Activated CD8-positive, alpha-beta T cell treated with anti-CD3 and anti-CD28 coated beads, Interleukin-2, amount 10 ng/mL, durations not matched to agents 7 days and 5 days (primary cell): ENCODE measurements at regions of chr2 and their contacts with region 1.

Region 1: DNA sequence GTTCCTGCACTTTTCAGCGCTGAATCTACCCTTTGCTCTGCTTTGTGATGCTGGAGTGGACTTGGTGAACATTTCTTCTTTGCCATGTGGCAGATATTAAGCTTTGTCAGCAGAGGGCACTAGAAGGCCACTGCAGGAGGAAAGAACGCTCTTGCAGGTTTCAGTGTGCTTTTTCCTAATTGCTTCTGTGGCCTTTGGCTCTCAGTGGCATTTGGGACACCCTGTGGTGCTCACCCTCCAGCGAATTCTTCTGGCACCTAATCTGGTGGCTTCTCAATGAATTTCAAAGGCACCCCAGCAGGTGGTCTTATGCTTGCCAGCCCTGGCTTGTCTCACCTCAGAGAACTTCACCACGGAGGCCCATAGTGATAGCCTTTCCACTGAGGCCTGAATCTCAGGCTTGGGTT is 146.7 kb downstream of the MYO3B start:
- DNase-seq: peak; percentile 69
- ATAC-seq: peak; percentile 64
- H3K4me3 Mint-ChIP-seq: no peak overlapping the region
- H3K27ac Mint-ChIP-seq: no peak overlapping the region
- H3K4me1 Mint-ChIP-seq: peaks cover 5% of the 10 kb centered on the region
- H3K27me3 Mint-ChIP-seq: peaks cover 2% of the 10 kb centered on the region

Region 2: GRCh38 chr2:170335351-170335750 is 10.7 kb after region 1 on chr2:
- CTCF ChIA-PET with region 1: interaction called, 11 read pairs
- POLR2A ChIA-PET with region 1: interaction called, 3 read pairs
- DNase-seq: no peak
- ATAC-seq: no peak
- H3K4me3 Mint-ChIP-seq: no peak overlapping the region
- H3K27ac Mint-ChIP-seq: no peak overlapping the region
- H3K4me1 Mint-ChIP-seq: peaks cover 25% of the 10 kb centered on the region
- H3K27me3 Mint-ChIP-seq: peaks cover 25% of the 10 kb centered on the region

Region 3: GRCh38 chr2:170361090-170361936 is 36.7 kb after region 1 on chr2:
- CTCF ChIA-PET with region 1: interaction called, 67 read pairs
- POLR2A ChIA-PET with region 1: no interaction called
- DNase-seq: peak; percentile 79
- ATAC-seq: peak; percentile 88
- H3K4me3 Mint-ChIP-seq: peak overlapping the region; percentile 1
- H3K27ac Mint-ChIP-seq: peak overlapping the region; percentile 68
- H3K4me1 Mint-ChIP-seq: peaks cover 36% of the 10 kb centered on the region
- H3K27me3 Mint-ChIP-seq: peaks cover 14% of the 10 kb centered on the region

Region 4: DNA sequence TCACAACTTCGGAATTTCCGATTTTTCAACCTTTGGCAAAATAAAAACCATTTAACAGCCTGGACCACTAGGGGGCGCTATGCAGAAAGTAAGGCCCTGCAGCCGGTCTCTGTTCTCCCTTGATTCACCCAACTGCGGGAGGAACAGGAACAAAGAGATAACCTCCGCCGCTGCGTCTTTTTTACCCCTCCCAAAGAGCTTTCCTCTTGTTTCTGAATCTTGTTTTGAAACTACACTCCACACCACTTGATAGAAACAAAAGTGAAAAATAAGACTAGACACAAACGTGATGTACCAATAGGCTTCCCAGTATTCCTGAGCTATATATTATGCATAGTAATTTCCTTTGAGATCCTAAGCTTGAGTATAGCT is 84.5 kb after region 1 on chr2:
- CTCF ChIA-PET with region 1: interaction called, 21 read pairs
- POLR2A ChIA-PET with region 1: no interaction called
- DNase-seq: peak; percentile 86
- ATAC-seq: peak; percentile 75
- H3K4me3 Mint-ChIP-seq: peak overlapping the region; percentile 37
- H3K27ac Mint-ChIP-seq: no peak overlapping the region
- H3K4me1 Mint-ChIP-seq: peaks cover 6% of the 10 kb centered on the region
- H3K27me3 Mint-ChIP-seq: peaks cover 38% of the 10 kb centered on the region